Psoas muscle (tissue), 8 donors: ENCODE measurements at regions of chr3 and their contacts with region 1.

Region 1: DNA sequence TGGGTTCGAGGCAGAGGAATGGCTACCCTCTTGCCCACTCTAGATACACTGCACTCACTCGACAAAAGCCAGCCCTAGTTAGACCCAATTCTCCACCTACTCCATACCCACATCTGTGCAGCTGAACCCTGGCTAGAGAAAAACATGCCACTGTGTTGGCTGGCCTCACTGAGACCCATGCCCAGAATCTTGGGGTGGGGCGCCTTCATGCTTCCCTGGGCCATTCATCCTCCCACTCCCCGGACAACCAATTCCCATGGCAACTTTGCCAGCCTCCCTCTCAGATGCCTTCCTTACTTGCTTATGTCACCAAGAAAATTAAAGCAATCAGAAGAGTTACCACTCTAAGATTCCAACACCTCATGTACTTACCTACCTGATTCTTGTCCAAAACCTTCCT is 9.2 kb upstream of the LIMD1 start:
- DNase-seq: no peak
- ATAC-seq: no peak
- H3K4me3 ChIP-seq: no peak overlapping the region
- H3K27ac ChIP-seq: no peak overlapping the region
- H3K4me1 ChIP-seq: peaks cover 11% of the 10 kb centered on the region
- H3K27me3 ChIP-seq: no peaks in the 10 kb centered on the region
- CTCF ChIP-seq: no peak

Region 2: GRCh38 chr3:45528429-45528828 is 56.9 kb before region 1 on chr3:
- intact Hi-C with region 1: loop called in 1 of 2 experiments (anchors 5 kb)
- DNase-seq: no peak
- ATAC-seq: no peak
- H3K4me3 ChIP-seq: no peak overlapping the region
- H3K27ac ChIP-seq: no peak overlapping the region
- H3K4me1 ChIP-seq: no peaks in the 10 kb centered on the region
- H3K27me3 ChIP-seq: no peaks in the 10 kb centered on the region
- CTCF ChIP-seq: no peak